ENCODE measurements at regions of chrX and their contacts with region 1.

Region 1: DNA sequence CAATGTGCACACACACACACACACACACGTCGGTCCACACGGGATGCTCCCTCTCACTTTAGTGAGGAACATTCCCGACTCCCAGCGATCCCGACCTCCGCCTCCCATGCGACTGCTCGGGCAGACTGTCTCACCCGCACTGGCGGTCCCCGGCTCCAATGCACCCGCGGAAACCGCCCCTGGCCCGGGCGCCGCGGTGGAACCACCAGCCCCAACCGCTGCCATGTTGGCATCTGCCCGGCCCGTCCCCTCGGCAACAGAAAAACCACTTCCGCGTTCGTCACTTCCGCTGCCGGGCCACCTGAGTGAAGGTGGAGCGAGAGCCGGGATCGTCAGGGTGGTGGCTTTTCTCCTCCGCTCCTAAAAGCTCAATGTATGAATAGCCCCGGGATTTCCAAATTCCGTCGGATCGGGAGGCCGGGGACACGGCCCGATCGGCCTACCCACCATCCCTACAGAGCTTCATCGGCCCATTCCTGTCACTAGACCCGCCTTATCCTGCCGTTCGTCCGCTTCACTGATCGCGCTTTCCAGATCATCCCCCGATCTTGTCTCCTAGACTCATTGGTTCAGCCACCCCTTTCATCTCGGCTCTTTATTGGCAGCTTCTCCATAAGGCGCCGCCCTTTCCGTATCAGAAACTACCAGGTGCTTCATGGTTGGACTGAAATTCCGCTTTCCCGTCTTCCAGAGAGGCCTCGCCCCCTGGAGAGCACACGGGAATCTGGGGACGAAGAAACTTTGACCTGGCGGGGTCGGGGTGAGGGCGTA is at the start of gene SLC35A2:
- DNase-seq: peak; percentile 97
- H3K4me3 Mint-ChIP-seq: peak within 1 kb of the TSS; percentile 96
- H3K27ac Mint-ChIP-seq: peak within 1 kb of the TSS; percentile 96
- H3K4me1 Mint-ChIP-seq: peaks cover 30% of the 10 kb centered on the region
- H3K27me3 Mint-ChIP-seq: no peaks in the 10 kb centered on the region
- total RNA-seq, gene SLC35A2: 19.5 and 22.8 TPM in 2 replicates

Region 2: DNA sequence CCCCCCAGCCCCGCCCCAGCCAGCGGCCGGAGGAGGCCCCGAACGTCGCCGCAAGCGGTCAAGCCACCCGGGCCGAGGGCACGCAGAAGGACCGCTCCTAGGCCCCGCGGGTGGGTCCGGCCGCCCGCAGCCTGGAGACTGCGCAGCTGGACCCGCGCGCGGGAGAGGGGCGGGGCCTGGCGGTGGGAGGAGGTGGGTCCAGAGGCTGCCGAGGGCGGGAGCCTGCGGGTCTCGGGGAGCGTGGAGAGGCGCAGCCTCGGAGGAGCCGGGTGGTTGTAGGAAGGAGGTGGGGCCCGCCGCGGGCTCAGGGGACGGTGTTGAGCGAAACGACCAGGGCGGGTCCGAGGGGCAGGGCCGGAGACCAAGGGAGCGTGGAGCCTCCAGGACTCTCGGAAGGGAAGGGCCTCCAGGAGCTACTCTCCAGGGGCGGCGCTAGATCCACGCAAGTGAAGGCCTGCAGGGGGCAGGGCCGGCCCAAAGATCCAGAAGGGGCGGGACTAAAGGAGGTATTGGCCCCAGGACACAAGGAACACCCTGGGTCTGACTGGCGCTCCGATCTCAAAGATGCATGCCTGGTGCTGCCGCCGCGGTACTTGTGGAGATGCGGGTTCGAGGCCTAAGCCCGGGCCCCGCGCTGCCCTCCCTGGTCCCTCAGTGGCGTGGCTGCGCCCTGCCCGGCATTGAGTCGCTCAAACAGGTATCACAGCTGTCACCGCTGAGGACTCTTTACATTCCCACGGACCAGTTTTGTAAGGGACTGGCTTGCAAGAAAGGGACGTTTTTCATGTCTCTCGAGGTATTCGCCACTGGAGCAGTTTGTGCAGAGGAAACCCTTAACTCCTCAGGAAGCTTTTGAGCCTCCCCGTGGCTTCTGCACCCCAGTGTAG is 20.0 kb before region 1 on chrX:
- intact Hi-C with region 1: loop called (anchors 1 kb)
- DNase-seq: peak; percentile 93
- H3K4me3 Mint-ChIP-seq: peak overlapping the region; percentile 88
- H3K27ac Mint-ChIP-seq: peak overlapping the region; percentile 25
- H3K4me1 Mint-ChIP-seq: peaks cover 23% of the 10 kb centered on the region
- H3K27me3 Mint-ChIP-seq: no peaks in the 10 kb centered on the region

Measured in activated CD4-positive, alpha-beta T cell treated with anti-CD3 and anti-CD28 coated beads, Interleukin-2, amount 10 ng/mL, durations not matched to agents 24 days and 14 days (primary cell).